Kidney (tissue), 22 donors: ENCODE measurements at regions of chr17 and their contacts with region 1.

Region 1: GRCh38 chr17:57604771-57605674 is 140.1 kb downstream of the CCDC182 start:
- DNase-seq: peak; percentile 64 to 85 (median 76)
- H3K4me3 ChIP-seq: peak overlapping the region in 1 of 3 donors; percentile 36
- H3K27ac ChIP-seq: peak overlapping the region; percentile 93 to 97
- H3K4me1 ChIP-seq: peaks cover 12 to 44% (median 37%) of the 10 kb centered on the region in 3 donors
- H3K27me3 ChIP-seq: no peaks in the 10 kb centered on the region
- CTCF ChIP-seq: no peak

Region 2: GRCh38 chr17:57662644-57663308 is 57.8 kb after region 1 on chr17:
- intact Hi-C with region 1: loop called (anchors 10 kb)
- DNase-seq: peak; percentile 96 to 99 (median 98)
- H3K4me3 ChIP-seq: peak overlapping the region; percentile 51 to 66 (median 55)
- H3K27ac ChIP-seq: peak overlapping the region; percentile 88 to 98
- H3K4me1 ChIP-seq: peaks cover 6 to 46% (median 36%) of the 10 kb centered on the region in 3 donors
- H3K27me3 ChIP-seq: no peaks in the 10 kb centered on the region
- CTCF ChIP-seq: peak; percentile 6